ENCODE measurements at regions of chr6 and their contacts with region 1.

Region 1: DNA sequence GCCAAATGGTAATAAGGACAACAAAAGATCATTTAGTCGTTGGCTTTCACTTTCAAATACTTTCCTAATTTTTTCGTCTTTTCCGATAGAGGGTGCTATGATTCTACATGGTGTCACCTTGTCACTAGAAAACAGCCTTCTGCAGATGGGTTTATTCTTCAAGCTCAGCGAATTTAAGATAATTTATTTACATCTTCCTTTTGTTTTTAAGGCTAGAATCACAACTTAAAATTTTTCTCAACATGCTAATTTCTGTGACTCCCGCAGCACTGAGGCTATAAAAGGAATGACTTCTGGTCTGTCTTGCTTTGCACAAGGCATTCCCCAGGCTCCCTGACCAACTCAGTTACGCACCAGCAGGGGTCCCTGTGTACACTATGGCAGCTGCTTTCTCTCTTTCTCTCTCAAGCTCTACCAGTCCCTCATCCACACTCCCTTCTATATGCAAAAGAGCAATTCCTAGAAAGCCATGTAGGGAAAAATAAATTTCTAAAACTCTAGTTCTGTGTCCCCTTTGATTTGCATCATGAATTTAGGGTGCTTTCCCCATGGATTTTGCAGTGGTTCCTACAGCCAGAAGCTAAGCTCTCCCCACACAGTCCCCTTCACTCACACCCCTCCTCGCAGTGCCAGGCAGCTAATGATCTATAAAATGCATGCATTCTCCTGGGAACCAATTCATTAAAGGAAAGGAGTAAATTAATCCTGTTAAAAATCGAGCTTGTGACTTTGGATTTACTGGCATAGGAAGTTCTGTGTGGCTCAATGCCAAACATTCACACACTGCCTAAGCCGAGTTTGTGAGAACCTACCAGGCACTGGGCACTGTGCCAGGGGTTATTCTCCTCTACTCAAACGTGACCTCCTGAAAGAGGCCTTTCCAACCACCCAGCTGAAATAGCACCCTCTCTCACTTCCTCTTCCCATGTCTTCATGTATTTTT is 74.5 kb downstream of the DCDC2 start:
- DNase-seq: peak in 9 of 10 donors; percentile 10 to 80 (median 60)
- H3K4me3 ChIP-seq: peak overlapping the region in 47 of 59 donors; percentile 2 to 59 (median 35)
- H3K27ac ChIP-seq: peak overlapping the region in 3 of 59 donors; percentile 12 to 39 (median 16)
- H3K27me3 ChIP-seq: no peaks in the 10 kb centered on the region
- CTCF ChIP-seq: peak; percentile 32 to 88 (median 70)

Region 2: GRCh38 chr6:23964865-23965264 is 318.4 kb before region 1 on chr6:
- intact Hi-C with region 1: no loop called
- DNase-seq: no peak
- H3K4me3 ChIP-seq: no peak overlapping the region
- H3K27ac ChIP-seq: no peak overlapping the region
- H3K27me3 ChIP-seq: peaks cover 0 to 6% (median 0%) of the 10 kb centered on the region in 45 donors
- CTCF ChIP-seq: no peak

Region 3: DNA sequence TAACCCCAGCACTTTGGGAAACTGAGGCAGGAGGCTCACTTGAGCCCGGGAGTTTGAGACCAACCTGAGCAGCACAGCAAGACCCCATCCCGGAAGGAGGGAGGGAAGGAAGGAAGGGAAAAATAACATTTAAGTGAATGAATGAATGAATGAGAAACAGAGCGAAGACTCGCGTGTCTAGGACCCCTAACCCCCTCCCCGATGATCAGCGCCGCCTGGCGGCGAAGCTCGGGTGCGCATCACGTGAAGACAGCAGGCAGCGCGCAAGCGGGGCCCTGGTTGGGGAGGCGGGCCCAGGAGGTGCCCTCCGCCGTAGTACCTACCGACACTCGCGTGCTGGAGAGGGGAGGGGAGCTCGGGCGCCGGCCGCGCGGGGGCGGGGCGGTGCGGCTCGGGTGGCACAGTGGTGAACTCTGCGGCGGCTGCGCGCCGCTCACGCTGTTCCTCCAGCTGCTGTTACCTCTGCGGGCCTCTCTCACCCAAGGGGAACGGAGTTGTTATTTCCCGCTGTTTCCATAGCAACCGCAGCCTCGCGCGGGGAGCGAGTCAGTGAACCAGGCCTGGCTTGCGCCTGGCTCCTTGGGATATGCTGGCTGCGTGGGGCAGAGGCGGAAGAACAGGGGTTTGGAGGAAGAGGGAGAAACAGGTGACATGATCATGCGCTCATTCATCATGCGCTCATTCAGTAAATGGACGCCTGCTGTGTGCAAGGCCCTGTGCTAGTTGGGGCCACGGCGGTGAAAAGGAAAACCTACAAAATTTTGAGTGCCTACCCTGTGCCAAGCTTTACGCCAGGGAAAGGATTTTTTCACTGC is 76.5 kb after region 1 on chr6:
- intact Hi-C with region 1: loop called in 1 of 2 experiments (anchors 2 kb)
- DNase-seq: peak; percentile 40 to 87 (median 74)
- H3K4me3 ChIP-seq: peak overlapping the region; percentile 33 to 77 (median 64)
- H3K27ac ChIP-seq: peak overlapping the region in 39 of 59 donors; percentile 4 to 80 (median 50)
- H3K27me3 ChIP-seq: peaks cover 0 to 19% (median 0%) of the 10 kb centered on the region in 45 donors
- CTCF ChIP-seq: peak in 55 of 56 donors; percentile 20 to 73 (median 53)

Region 4: GRCh38 chr6:24385536-24386269 is 102.4 kb after region 1 on chr6:
- intact Hi-C with region 1: loop called in 1 of 2 experiments (anchors 10 kb)
- DNase-seq: no peak
- H3K4me3 ChIP-seq: no peak overlapping the region
- H3K27ac ChIP-seq: no peak overlapping the region
- H3K27me3 ChIP-seq: no peaks in the 10 kb centered on the region
- CTCF ChIP-seq: no peak